ENCODE measurements at regions of chr3 and their contacts with region 1.

Region 1: GRCh38 chr3:40580494-40581091 is 55.8 kb downstream of the ZNF621 start:
- DNase-seq: peak; percentile 38
- ATAC-seq: peak; percentile 81
- H3K4me3 ChIP-seq: no peak overlapping the region
- H3K27ac ChIP-seq: no peak overlapping the region
- H3K4me1 ChIP-seq: no peaks in the 10 kb centered on the region
- H3K27me3 ChIP-seq: no peaks in the 10 kb centered on the region
- CTCF ChIP-seq: peak; percentile 57 to 99 (median 93); a peak in 5 of 6 replicates
- POLR2A ChIP-seq: no peak
- RAD21 ChIP-seq: peak; percentile 92

Region 2: GRCh38 chr3:40329071-40329470 is 251.5 kb before region 1 on chr3:
- CTCF ChIA-PET with region 1: no interaction called
- POLR2A ChIA-PET with region 1: no interaction called
- RAD21 ChIA-PET with region 1: no interaction called
- intact Hi-C with region 1: loop called (anchors 5 kb)
- DNase-seq: no peak
- ATAC-seq: no peak
- H3K4me3 ChIP-seq: no peak overlapping the region
- H3K27ac ChIP-seq: no peak overlapping the region
- H3K4me1 ChIP-seq: no peaks in the 10 kb centered on the region
- H3K27me3 ChIP-seq: no peaks in the 10 kb centered on the region
- CTCF ChIP-seq: no peak
- POLR2A ChIP-seq: no peak
- RAD21 ChIP-seq: no peak

Region 3: GRCh38 chr3:40899286-40899712 is 318.7 kb after region 1 on chr3:
- CTCF ChIA-PET with region 1: no interaction called
- POLR2A ChIA-PET with region 1: no interaction called
- RAD21 ChIA-PET with region 1: no interaction called
- intact Hi-C with region 1: no loop called
- DNase-seq: no peak
- ATAC-seq: no peak
- H3K4me3 ChIP-seq: no peak overlapping the region
- H3K27ac ChIP-seq: no peak overlapping the region
- H3K4me1 ChIP-seq: no peaks in the 10 kb centered on the region
- H3K27me3 ChIP-seq: peaks cover 4% of the 10 kb centered on the region; the same call in 1 of the 2 replicates
- CTCF ChIP-seq: no peak
- POLR2A ChIP-seq: no peak
- RAD21 ChIP-seq: no peak

Region 4: DNA sequence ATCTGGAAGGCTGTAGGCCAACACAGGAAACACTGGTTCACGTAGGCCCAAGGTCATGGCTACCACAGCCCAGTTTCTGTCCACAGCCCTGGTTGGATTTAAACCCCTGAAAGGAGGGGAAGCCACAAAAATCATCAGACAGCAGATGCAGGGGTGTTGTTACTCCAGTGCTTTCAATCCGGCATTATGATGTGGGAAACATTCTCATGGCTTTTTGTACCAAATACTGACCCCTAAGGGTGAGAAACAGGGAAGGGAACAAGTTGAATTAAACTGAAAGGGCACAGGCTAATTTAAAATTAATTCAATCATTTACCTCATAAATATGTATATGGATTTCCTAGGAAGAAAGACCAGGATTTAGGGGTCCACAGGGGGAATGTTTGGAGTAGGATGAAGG is 994.3 kb after region 1 on chr3:
- CTCF ChIA-PET with region 1: no interaction called
- POLR2A ChIA-PET with region 1: no interaction called
- RAD21 ChIA-PET with region 1: no interaction called
- intact Hi-C with region 1: loop called (anchors 5 kb)
- DNase-seq: no peak
- ATAC-seq: no peak
- H3K4me3 ChIP-seq: no peak overlapping the region
- H3K27ac ChIP-seq: no peak overlapping the region
- H3K4me1 ChIP-seq: peaks cover 1 to 5% of the 10 kb centered on the region in 2 experiments
- H3K27me3 ChIP-seq: no peaks in the 10 kb centered on the region
- CTCF ChIP-seq: peak; percentile 9 to 32 (median 21); a peak in 2 of 6 replicates
- POLR2A ChIP-seq: no peak
- RAD21 ChIP-seq: peak; percentile 43; the same call in 1 of the 2 replicates

Region 5: GRCh38 chr3:41863024-41863423 is 1282.4 kb after region 1 on chr3:
- CTCF ChIA-PET with region 1: no interaction called
- POLR2A ChIA-PET with region 1: no interaction called
- RAD21 ChIA-PET with region 1: no interaction called
- intact Hi-C with region 1: loop called (anchors 5 kb)
- DNase-seq: peak; percentile 6
- ATAC-seq: peak; percentile 92
- H3K4me3 ChIP-seq: no peak overlapping the region
- H3K27ac ChIP-seq: no peak overlapping the region
- H3K4me1 ChIP-seq: no peaks in the 10 kb centered on the region
- H3K27me3 ChIP-seq: no peaks in the 10 kb centered on the region
- CTCF ChIP-seq: peak in 2 of 3 experiments; percentile 39 to 44; a peak in 4 of 6 replicates
- POLR2A ChIP-seq: no peak
- RAD21 ChIP-seq: 0 out of 2 replicates have a peak, but pooled peaks have one; percentile 8

Region 6: GRCh38 chr3:42101048-42101447 is 1520.5 kb after region 1 on chr3:
- CTCF ChIA-PET with region 1: no interaction called
- POLR2A ChIA-PET with region 1: no interaction called
- RAD21 ChIA-PET with region 1: no interaction called
- intact Hi-C with region 1: loop called (anchors 10 kb)
- DNase-seq: no peak
- ATAC-seq: no peak
- H3K4me3 ChIP-seq: no peak overlapping the region
- H3K27ac ChIP-seq: no peak overlapping the region
- H3K4me1 ChIP-seq: peaks cover 10 to 13% of the 10 kb centered on the region in 2 experiments; a peak in 3 of 4 replicates
- H3K27me3 ChIP-seq: no peaks in the 10 kb centered on the region
- CTCF ChIP-seq: no peak
- POLR2A ChIP-seq: no peak
- RAD21 ChIP-seq: no peak